Activated CD4-positive, alpha-beta memory T cell treated with anti-CD3 and anti-CD28 coated beads, Interleukin-2, amount 10 ng/mL, durations not matched to agents 7 days and 5 days (primary cell): ENCODE measurements at regions of chr6 and their contacts with region 1.

Region 1: GRCh38 chr6:70566751-70567382 is at the start of gene SDHAF4:
- DNase-seq: peak; percentile 94
- H3K4me3 Mint-ChIP-seq: peak within 1 kb of the TSS; percentile 79
- H3K27ac Mint-ChIP-seq: peak within 1 kb of the TSS; percentile 76
- H3K4me1 Mint-ChIP-seq: peaks cover 21% of the 10 kb centered on the region
- H3K27me3 Mint-ChIP-seq: no peaks in the 10 kb centered on the region
- total RNA-seq, gene SDHAF4: 9.8 to 11.6 TPM

Region 2: DNA sequence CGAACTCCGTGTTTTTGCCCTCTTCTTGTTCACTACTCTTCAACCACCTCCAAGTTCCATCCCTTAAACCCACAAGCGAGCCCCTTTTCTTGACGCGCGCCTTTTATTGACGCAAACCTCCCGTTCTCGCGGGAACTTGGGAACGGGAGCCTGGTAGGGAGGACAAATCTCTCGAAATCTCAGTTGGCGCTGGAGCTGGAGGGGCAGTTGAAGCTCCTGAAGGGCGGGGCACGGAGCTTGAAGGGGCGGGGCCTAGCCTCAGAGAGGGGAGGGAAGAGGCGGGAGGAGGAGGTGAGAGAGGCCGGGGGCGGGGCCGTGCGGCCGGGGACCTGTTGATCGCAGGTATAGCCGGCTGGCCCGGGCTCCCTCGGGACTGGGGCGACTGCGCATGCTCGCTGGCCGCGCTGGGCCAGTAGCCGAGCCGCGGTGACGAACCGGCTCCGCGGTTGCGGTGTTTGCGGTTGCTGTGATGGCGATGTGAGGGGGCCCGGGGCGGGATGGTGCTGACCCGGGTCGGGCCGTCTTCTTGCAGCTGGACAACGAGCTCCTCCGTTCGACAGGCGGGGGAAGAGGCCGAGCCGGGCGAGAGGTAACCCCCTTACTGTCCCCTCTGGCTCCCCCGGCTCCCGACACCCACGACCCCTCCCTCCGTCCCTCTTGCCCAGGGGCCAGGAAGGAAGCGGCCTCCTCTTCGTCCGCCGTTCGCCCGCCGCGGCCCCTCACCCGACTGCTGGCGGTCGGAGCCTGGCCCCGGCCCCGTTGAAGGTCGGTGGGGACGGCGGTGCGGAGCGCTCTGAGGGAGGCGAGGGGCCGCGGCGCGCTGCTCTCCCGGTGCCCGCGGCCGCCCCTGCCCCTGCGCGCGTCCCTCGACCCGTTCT is 153.5 kb before region 1 on chr6 and contains the start of gene FAM135A:
- CTCF ChIA-PET with region 1: interaction called, 3 read pairs
- POLR2A ChIA-PET with region 1: interaction called, 11 read pairs
- DNase-seq: peak; percentile 96
- H3K4me3 Mint-ChIP-seq: peak within 1 kb of the TSS; percentile 87
- H3K27ac Mint-ChIP-seq: peak within 1 kb of the TSS; percentile 77
- H3K4me1 Mint-ChIP-seq: peaks cover 25% of the 10 kb centered on the region
- H3K27me3 Mint-ChIP-seq: peaks cover 6% of the 10 kb centered on the region
- total RNA-seq, gene FAM135A: 9.2 to 10.0 TPM